CD4-positive, alpha-beta memory T cell (primary cell): ENCODE measurements at regions of chr1 and their contacts with region 1.

Region 1: GRCh38 chr1:52552505-52553361 is at the start of gene TUT4:
- DNase-seq: peak; percentile 67 to 83 (median 73)
- H3K4me3 ChIP-seq: peak within 1 kb of the TSS; percentile 68 to 95
- H3K4me3 Mint-ChIP-seq: peak within 1 kb of the TSS in 7 of 8 donors; percentile 48 to 87 (median 77)
- H3K27ac ChIP-seq: peak within 1 kb of the TSS; percentile 92
- H3K27ac Mint-ChIP-seq: peak within 1 kb of the TSS; percentile 57 to 91 (median 83)
- H3K4me1 ChIP-seq: peaks cover 41% of the 10 kb centered on the region
- H3K4me1 Mint-ChIP-seq: peaks cover 25 to 41% (median 33%) of the 10 kb centered on the region in 4 donors
- H3K27me3 ChIP-seq: no peaks in the 10 kb centered on the region
- H3K27me3 Mint-ChIP-seq: no peaks in the 10 kb centered on the region
- total RNA-seq, gene TUT4: 151 to 159 TPM

Region 2: DNA sequence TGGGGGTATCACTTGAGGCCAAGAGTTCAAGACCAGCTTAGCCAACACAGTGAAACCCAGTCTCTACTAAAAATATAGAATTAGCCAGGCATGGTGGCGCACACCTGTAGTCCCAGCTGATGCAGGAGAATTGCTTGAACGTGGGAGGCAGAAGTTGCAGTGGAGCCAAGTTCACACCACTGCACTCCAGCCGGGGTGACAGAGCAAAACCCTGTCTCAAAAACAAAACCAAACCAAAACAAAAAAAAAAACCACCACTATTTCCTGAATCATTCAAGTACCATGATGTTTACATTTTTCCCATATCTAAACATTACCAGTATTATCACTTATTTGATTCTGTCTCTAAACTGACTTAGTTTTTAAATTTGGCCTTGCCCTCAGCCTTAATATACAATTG is 29.4 kb before region 1 on chr1:
- CTCF ChIA-PET with region 1: interaction called, 3 read pairs
- POLR2A ChIA-PET with region 1: interaction called, 19 read pairs
- intact Hi-C with region 1: loop called (anchors 2 kb)
- DNase-seq: peak in 4 of 5 donors; percentile 8 to 32 (median 16)
- H3K4me3 ChIP-seq: no peak overlapping the region
- H3K4me3 Mint-ChIP-seq: peak overlapping the region in 4 of 8 donors; percentile 33 to 62 (median 55)
- H3K27ac ChIP-seq: no peak overlapping the region
- H3K27ac Mint-ChIP-seq: peak overlapping the region in 5 of 7 donors; percentile 17 to 67 (median 51)
- H3K4me1 ChIP-seq: peaks cover 13% of the 10 kb centered on the region
- H3K4me1 Mint-ChIP-seq: peaks cover 19 to 40% (median 30%) of the 10 kb centered on the region in 4 donors
- H3K27me3 ChIP-seq: no peaks in the 10 kb centered on the region
- H3K27me3 Mint-ChIP-seq: no peaks in the 10 kb centered on the region

Region 3: DNA sequence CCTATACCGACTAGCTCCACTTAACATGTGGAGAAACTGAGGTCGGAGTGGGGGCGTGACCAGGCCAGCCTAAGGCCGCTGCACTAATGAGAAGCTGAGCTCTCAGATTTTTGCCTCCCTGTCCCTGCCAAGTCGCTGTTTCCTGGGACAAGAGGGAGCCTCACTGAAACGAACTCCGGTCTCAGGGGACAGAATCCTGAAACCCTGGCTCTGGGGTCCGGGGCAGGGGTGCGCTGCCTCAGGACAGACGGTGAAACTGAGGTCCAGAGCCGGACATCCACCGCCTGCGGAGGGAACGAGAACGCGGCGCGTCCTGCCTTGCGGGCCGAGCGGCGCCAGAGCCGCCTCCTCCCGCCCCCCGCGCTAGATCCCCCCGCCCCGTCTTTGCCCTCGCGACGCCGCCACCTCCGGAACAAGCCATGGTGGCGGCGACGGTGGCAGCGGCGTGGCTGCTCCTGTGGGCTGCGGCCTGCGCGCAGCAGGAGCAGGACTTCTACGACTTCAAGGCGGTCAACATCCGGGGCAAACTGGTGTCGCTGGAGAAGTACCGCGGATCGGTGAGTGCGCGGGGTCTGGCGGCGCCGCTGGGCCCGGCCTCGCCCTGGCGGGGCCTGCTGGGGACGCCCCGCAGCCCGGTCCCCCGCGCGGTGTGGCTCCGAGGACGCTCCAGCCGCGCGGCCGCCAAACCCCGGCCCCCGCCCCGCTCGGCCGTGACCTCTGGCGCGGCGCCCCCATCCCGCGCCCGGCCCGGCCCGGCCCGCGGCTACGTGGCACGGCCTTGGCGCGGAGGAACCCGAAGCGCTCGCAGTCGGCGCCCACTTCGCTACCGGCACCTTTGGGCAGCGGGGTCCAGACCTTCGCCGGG is 49.5 kb after region 1 on chr1 and contains the start of gene GPX7:
- CTCF ChIA-PET with region 1: interaction called, 3 read pairs
- POLR2A ChIA-PET with region 1: interaction called, 24 read pairs
- intact Hi-C with region 1: loop called (anchors 2 kb)
- DNase-seq: peak; percentile 61 to 68 (median 65)
- H3K4me3 ChIP-seq: peak within 1 kb of the TSS; percentile 60 to 64
- H3K4me3 Mint-ChIP-seq: peak within 1 kb of the TSS; percentile 89 to 94 (median 92)
- H3K27ac ChIP-seq: peak within 1 kb of the TSS; percentile 69
- H3K27ac Mint-ChIP-seq: peak within 1 kb of the TSS; percentile 89 to 97 (median 94)
- H3K4me1 ChIP-seq: peaks cover 39% of the 10 kb centered on the region
- H3K4me1 Mint-ChIP-seq: peaks cover 38 to 57% (median 47%) of the 10 kb centered on the region in 4 donors
- H3K27me3 ChIP-seq: no peaks in the 10 kb centered on the region
- H3K27me3 Mint-ChIP-seq: no peaks in the 10 kb centered on the region
- total RNA-seq, gene GPX7: 26.3 to 27.5 TPM

Region 4: GRCh38 chr1:53685272-53686051 is 1132.7 kb after region 1 on chr1:
- CTCF ChIA-PET with region 1: no interaction called
- POLR2A ChIA-PET with region 1: no interaction called
- intact Hi-C with region 1: no loop called
- DNase-seq: no peak
- H3K4me3 ChIP-seq: no peak overlapping the region
- H3K4me3 Mint-ChIP-seq: no peak overlapping the region
- H3K27ac ChIP-seq: no peak overlapping the region
- H3K27ac Mint-ChIP-seq: no peak overlapping the region
- H3K4me1 ChIP-seq: peaks cover 5% of the 10 kb centered on the region
- H3K4me1 Mint-ChIP-seq: peaks cover 5 to 7% (median 6%) of the 10 kb centered on the region in 4 donors
- H3K27me3 ChIP-seq: no peaks in the 10 kb centered on the region
- H3K27me3 Mint-ChIP-seq: peaks cover 16 to 22% of the 10 kb centered on the region in 2 donors